A549 (cell line): ENCODE measurements at regions of chr12 and their contacts with region 1.

Region 1: DNA sequence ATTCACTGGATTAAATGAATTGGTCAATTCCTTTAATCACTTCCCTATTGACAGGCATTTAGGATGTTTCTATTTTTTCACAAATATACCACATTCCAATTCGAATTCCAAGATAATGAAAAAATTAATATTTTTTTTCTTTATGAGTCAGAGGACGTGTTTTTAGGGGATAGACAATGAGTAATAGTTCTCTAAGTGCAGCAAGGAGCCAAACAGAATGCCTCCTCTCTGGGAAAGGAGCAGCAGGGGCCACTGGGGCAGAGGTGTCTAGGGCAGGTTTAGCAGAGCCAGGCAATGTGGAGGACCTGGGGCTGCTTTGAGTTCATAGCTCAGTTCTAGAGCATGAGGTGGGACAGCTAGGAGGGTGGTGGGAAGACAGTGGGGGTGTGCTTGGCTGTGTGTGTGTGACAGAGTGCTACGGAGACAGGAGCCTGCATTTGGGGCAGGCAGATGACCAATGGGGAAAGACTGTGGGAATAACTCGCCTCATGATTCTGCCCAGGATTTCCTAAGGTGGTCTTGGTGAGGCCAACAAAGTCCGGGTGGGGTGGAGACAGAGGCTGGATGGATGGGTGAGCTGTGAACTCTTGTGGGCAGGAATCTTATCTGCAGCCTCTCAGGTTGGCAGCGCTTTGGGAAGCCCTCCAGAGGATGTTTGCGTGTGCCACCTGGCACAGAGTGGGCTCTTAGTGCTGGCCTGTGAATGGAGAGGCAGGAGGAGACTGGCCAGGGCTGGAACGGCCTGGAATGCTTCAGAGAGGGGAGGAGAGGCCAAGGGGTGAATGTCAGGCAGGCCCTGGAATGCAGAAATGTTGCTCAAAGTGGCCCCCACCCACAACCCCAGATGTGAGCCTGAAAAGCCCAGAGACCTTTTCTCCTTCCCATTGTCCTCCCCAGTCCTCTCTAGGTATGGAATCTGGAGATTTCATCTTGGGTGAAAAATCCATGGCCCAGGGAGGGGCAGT is 2.4 kb upstream of the KRT7 start:
- DNase-seq: peak in 1 of 2 experiments; percentile 76
- ATAC-seq: peak; percentile 30 to 55; a peak in 3 of 6 replicates
- H3K4me3 ChIP-seq: no peak overlapping the region
- H3K27ac ChIP-seq: peak overlapping the region; percentile 97
- H3K4me1 ChIP-seq: peaks cover 48% of the 10 kb centered on the region
- CTCF ChIP-seq: no peak
- EP300 ChIP-seq: peak; percentile 67 to 71; a peak in 2 of 5 replicates
- POLR2A ChIP-seq: no peak
- RAD21 ChIP-seq: 0 out of 5 replicates have a peak, but pooled peaks of 1 of the 2 experiments have one; percentile 14

Region 2: DNA sequence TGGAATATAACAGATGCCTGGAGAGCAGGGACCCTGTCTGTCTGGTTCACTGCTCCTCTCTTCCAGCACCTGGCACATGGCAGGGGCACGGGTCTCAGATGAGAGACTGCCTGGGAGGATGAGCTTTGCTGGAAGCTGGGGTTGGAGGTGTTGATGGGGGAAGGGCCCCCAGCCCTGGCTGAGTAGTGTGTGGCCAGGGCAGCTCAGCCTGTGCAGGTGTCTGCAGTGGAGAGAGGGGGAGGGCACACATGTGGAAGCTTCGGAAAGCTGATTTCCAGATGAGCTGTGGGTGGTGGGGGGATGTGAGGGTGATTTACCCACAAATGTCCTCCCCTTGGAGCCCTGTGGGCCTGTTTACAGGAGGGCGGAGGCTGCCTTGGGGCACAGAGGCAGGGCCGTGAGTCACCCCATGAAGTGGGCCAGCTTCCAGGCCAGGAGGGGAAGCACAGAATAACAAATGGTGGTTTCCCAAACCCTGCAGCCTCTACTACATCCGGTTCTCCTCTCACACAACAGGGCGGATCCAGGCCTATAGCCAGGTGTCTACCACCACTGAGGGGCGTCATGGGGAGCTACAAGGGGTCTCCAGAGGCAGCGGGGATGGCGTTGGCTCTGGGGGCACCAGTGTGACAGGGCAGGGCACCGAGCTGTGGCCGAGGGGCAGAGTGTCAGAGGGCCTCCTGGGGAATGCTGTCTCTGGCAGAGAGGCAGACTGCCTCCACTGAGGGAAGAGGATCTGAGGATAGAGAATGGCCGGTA is 13.4 kb after region 1 on chr12:
- CTCF ChIA-PET with region 1: interaction called, 182 read pairs
- POLR2A ChIA-PET with region 1: interaction called, 43 read pairs
- DNase-seq: peak; percentile 92 to 93
- ATAC-seq: peak; percentile 22 to 31
- H3K4me3 ChIP-seq: peak overlapping the region; percentile 24; the same call in 1 of the 3 replicates
- H3K27ac ChIP-seq: peak overlapping the region; percentile 92 to 97
- H3K4me1 ChIP-seq: peaks cover 100% of the 10 kb centered on the region
- CTCF ChIP-seq: no peak
- EP300 ChIP-seq: peak; percentile 55 to 80; a peak in 3 of 5 replicates
- POLR2A ChIP-seq: no peak
- RAD21 ChIP-seq: no peak; a peak in 2 of 5 replicates